Prostate gland (tissue), 2 donors: ENCODE measurements at regions of chr15 and their contacts with region 1.

Region 1: GRCh38 chr15:37125143-37125542 is 24.8 kb upstream of the MEIS2 start:
- DNase-seq: no peak
- H3K4me3 ChIP-seq: no peak overlapping the region
- H3K27ac ChIP-seq: no peak overlapping the region
- H3K4me1 ChIP-seq: no peaks in the 10 kb centered on the region
- H3K27me3 ChIP-seq: no peaks in the 10 kb centered on the region
- CTCF ChIP-seq: no peak
- POLR2A ChIP-seq: no peak

Region 2: GRCh38 chr15:36808411-36809160 is 316.6 kb before region 1 on chr15:
- intact Hi-C with region 1: loop called (anchors 10 kb)
- DNase-seq: peak; percentile 26
- H3K4me3 ChIP-seq: no peak overlapping the region
- H3K27ac ChIP-seq: peak overlapping the region; percentile 16 to 41
- H3K4me1 ChIP-seq: peaks cover 8% of the 10 kb centered on the region
- H3K27me3 ChIP-seq: no peaks in the 10 kb centered on the region
- CTCF ChIP-seq: no peak
- POLR2A ChIP-seq: no peak